WTC11 (cell line): ENCODE measurements at regions of chr21 and their contacts with region 1.

Region 1: DNA sequence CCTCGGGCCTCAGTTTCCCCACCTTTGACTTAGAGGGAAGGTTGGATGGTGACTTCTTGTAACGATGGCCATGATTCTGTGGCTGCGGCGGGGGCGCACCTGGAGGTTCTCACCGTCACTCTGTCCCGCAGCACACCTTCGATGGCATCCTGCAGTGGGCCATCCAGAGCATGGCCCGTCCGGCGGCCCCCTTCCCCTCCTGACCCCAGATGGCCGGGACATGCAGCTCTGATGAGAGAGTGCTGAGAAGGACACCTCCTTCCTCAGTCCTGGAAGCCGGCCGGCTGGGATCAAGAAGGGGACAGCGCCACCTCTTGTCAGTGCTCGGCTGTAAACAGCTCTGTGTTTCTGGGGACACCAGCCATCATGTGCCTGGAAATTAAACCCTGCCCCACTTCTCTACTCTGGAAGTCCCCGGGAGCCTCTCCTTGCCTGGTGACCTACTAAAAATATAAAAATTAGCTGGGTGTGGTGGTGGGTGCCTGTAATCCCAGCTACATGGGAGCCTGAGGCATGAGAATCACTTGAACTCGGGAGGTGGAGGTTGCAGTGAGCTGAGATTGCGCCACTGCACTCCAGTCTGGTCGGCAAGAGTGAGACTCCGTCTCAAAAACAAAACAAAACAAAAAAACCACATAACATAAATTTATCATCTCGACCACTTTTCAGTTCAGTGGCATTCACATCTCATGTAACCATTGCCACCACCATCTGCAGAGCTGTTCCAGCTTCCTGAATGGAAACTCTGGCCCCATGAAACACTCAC is 2.1 kb upstream of the PFKL start:
- DNase-seq: peak; percentile 88
- ATAC-seq: peak; percentile 63
- H3K4me3 Mint-ChIP-seq: no peak overlapping the region
- H3K27ac Mint-ChIP-seq: no peak overlapping the region
- H3K4me1 Mint-ChIP-seq: peaks cover 20% of the 10 kb centered on the region
- H3K27me3 Mint-ChIP-seq: peaks cover 11% of the 10 kb centered on the region
- CTCF ChIP-seq: peak; percentile 51

Region 2: DNA sequence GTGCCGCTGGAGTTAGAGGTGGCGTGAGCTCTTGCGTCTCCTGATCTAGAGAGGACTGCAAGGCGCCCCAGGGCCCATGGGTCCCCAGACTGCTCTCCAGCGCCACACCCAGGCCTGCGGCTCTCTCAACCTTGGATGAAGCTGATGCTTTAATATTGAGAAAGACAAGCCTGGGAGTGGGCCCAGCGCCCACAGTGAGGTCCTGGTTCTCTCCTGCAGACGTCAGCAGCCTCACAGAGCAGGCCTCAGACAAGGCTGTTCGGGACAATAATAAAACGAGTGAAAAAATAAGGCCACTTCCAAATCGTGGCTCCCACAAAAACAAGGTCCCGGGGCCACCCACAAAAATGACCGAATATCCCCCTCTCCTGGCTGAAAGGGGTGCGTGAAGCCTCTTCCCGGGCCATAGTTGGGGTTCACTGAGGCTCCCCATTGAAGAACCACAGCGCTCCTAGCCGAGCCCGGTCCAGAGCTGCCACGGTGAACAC is 30.0 kb before region 1 on chr21:
- CTCF ChIA-PET with region 1: interaction called, 12 read pairs
- POLR2A ChIA-PET with region 1: interaction called, 4 read pairs
- DNase-seq: peak; percentile 66
- ATAC-seq: peak; percentile 76
- H3K4me3 Mint-ChIP-seq: no peak overlapping the region
- H3K27ac Mint-ChIP-seq: no peak overlapping the region
- H3K4me1 Mint-ChIP-seq: peaks cover 4% of the 10 kb centered on the region
- H3K27me3 Mint-ChIP-seq: no peaks in the 10 kb centered on the region
- CTCF ChIP-seq: 0 out of 2 replicates have a peak, but pooled peaks have one; percentile 13

Region 3: GRCh38 chr21:44285509-44285992 is 12.2 kb before region 1 on chr21 and contains the start of gene AIRE:
- CTCF ChIA-PET with region 1: interaction called, 22 read pairs
- POLR2A ChIA-PET with region 1: no interaction called
- DNase-seq: peak; percentile 33
- ATAC-seq: peak; percentile 21
- H3K4me3 Mint-ChIP-seq: peak within 1 kb of the TSS; percentile 45; the same call in 1 of the 2 replicates
- H3K27ac Mint-ChIP-seq: no peak within 1 kb of the TSS
- H3K4me1 Mint-ChIP-seq: peaks cover 21% of the 10 kb centered on the region
- H3K27me3 Mint-ChIP-seq: peaks cover 30% of the 10 kb centered on the region
- CTCF ChIP-seq: no peak
- total RNA-seq, gene AIRE: 0.05 to 0.09 TPM in 2 of 3 replicates, not detected in the other